ENCODE measurements at regions of chr16 and their contacts with region 1.

Region 1: DNA sequence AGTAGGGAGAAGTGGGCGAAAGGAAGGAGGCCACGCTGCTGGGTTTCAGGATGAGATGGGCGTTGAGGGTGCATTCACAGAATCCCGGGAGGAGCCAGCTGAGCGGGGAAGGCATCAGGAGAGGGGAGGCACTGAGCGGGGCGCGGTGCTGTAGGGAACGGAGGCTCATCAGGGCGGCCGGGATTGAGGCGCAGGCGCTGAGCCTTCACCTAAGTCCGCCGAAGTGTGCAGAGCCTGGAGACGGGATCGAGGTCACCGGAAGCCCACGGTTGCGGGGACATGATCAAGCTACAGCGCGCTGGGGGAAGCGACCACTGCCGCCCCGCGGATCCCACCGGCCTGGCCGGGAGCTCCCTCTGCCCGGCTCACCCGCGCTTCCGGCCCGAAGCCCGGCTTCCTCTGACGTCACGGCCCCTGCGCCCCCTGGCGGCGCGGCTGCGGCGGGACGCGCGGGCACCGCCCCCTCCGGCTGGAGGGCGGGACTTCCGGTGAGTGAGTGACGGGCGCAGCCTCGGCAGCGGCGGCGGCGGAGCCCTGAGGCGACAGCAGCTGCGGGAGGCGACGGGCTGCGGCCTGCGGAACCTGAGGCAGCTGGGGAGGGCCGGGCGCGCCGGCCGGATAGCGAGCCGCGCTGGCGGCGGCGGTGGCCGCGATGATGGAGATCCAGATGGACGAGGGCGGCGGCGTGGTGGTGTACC is at the start of gene MAPK8IP3:
- DNase-seq: peak; percentile 69 to 99
- H3K4me3 ChIP-seq: peak within 1 kb of the TSS; percentile 100
- H3K27ac ChIP-seq: peak within 1 kb of the TSS; percentile 72
- H3K4me1 ChIP-seq: peaks cover 18% of the 10 kb centered on the region
- H3K27me3 ChIP-seq: no peaks in the 10 kb centered on the region
- CTCF ChIP-seq: peak; percentile 74
- total RNA-seq, gene MAPK8IP3: 119 and 125 TPM in 2 replicates

Region 2: DNA sequence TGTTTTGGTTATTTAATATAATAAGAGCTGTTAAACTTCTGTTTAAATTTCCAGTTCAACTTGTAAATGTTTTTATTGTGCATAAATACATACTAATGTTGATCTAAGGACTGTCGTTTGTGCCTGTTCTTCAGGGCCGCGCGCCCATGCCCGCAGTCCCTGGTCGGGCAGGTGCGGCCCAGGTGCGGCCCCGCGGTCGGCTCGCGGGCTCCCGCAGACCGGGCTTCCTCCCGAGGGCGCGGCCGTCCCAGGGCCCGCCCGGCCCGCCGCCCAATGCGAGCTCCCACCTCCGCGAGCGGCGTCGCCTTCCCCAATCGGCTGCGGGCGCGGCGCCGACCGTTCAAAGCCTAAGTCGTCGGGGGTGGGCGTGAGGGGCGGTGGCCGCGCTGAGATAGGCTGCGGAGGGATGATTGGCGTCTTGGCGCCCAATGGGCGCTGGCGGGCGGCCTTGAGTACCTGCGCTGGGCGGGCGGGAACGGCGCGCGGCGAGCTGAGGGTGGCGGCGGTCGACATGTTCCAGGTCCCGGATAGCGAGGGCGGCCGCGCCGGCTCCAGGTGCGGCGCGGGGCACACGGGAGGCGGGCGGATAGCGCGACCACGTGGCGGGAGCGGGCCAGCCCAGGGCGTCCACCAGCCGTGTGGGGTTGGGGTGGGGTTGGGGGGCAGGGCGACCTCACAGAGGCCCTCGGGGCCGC is 27.9 kb before region 1 on chr16 and contains the start of gene JPT2:
- CTCF ChIA-PET with region 1: interaction called, 5 read pairs
- POLR2A ChIA-PET with region 1: interaction called, 3 read pairs
- intact Hi-C with region 1: loop called (anchors 1 kb)
- DNase-seq: peak; percentile 90 to 99
- H3K4me3 ChIP-seq: peak within 1 kb of the TSS; percentile 98
- H3K27ac ChIP-seq: peak within 1 kb of the TSS; percentile 82
- H3K4me1 ChIP-seq: peaks cover 27% of the 10 kb centered on the region
- H3K27me3 ChIP-seq: no peaks in the 10 kb centered on the region
- CTCF ChIP-seq: no peak
- total RNA-seq, gene JPT2: 199 and 244 TPM in 2 replicates

Region 3: DNA sequence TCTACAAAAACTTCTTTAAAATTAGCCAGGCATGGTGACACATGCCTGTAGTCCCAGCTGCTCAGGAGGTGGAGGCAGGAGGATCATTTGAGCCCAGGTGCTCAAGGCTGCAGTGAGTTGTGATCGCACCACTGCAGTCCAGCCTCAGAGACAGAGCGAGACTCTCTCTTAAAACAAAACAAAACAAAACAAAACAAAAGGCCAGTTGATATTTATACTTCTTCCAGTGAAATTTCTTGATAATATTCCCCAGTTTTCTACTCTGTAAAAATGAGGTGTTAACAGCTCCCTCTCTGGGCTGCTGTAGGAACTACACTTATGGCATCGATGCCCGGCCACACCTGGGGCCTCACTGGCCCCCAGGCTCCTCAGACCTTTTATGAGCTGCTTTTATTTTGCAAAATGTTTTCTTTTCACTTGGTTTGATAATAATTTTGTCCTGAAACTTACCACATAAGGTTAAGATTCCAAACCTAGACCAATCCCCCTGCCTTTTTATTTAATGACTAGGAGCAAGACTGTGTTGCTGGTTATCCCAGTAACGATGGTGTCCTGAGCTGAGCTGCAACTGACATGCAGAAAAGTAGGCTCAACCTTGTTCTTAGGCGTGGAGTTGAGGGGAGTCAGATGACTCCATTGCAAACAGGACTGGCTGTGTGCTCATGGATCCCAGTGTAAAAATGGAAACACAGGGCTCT is 17.8 kb after region 1 on chr16:
- CTCF ChIA-PET with region 1: interaction called, 10 read pairs
- POLR2A ChIA-PET with region 1: no interaction called
- intact Hi-C with region 1: no loop called
- DNase-seq: peak in 1 of 2 experiments; percentile 68
- H3K4me3 ChIP-seq: no peak overlapping the region
- H3K27ac ChIP-seq: peak overlapping the region; percentile 67; the same call in 1 of the 2 replicates
- H3K4me1 ChIP-seq: peaks cover 42% of the 10 kb centered on the region
- H3K27me3 ChIP-seq: no peaks in the 10 kb centered on the region
- CTCF ChIP-seq: peak; percentile 90

Region 4: GRCh38 chr16:1772736-1773584 is 67.1 kb after region 1 on chr16 and contains the starts of genes EME2 and MRPS34:
- CTCF ChIA-PET with region 1: no interaction called
- POLR2A ChIA-PET with region 1: interaction called, 21 read pairs
- intact Hi-C with region 1: loop called (anchors 2 kb)
- DNase-seq: peak; percentile 69 to 93
- H3K4me3 ChIP-seq: peak within 1 kb of the TSS; percentile 77
- H3K27ac ChIP-seq: peak within 1 kb of the TSS; percentile 77
- H3K4me1 ChIP-seq: peaks cover 19% of the 10 kb centered on the region
- H3K27me3 ChIP-seq: no peaks in the 10 kb centered on the region
- CTCF ChIP-seq: peak; percentile 90
- total RNA-seq, gene EME2: 24.2 and 32.4 TPM in 2 replicates
- total RNA-seq, gene MRPS34: 201 and 247 TPM in 2 replicates

Region 5: GRCh38 chr16:1791943-1792812 is 86.3 kb after region 1 on chr16:
- CTCF ChIA-PET with region 1: no interaction called
- POLR2A ChIA-PET with region 1: interaction called, 17 read pairs
- intact Hi-C with region 1: no loop called
- DNase-seq: no peak
- H3K4me3 ChIP-seq: no peak overlapping the region
- H3K27ac ChIP-seq: no peak overlapping the region
- H3K4me1 ChIP-seq: no peaks in the 10 kb centered on the region
- H3K27me3 ChIP-seq: no peaks in the 10 kb centered on the region
- CTCF ChIP-seq: no peak

Region 6: GRCh38 chr16:1839554-1839953 is 133.7 kb after region 1 on chr16:
- CTCF ChIA-PET with region 1: no interaction called
- POLR2A ChIA-PET with region 1: no interaction called
- intact Hi-C with region 1: no loop called
- DNase-seq: no peak
- H3K4me3 ChIP-seq: no peak overlapping the region
- H3K27ac ChIP-seq: no peak overlapping the region
- H3K4me1 ChIP-seq: no peaks in the 10 kb centered on the region
- H3K27me3 ChIP-seq: no peaks in the 10 kb centered on the region
- CTCF ChIP-seq: no peak